AG04450 (cell line): ENCODE measurements at regions of chr18 and their contacts with region 1.

Region 1: DNA sequence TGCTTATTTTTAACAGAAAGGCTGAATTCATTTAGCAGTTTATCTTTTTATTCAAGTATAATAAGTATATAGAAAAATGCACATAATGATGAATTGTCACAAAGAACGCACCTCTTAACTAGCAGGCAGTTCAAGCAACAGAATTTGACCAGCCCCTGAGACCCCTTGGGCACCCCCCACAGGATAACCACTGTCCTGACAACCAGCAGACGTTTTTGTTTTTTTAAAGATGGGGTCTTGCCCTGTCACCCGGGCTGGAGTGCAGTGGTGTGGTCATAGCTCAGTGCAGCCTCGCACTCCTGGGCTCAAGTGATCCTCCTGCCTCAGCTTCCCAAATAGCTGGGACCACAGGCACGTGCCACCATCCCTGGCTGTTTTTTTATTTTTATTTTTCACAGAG is 14.0 kb downstream of the PRELID3A start:
- DNase-seq: no peak
- H3K4me3 ChIP-seq: no peak overlapping the region
- H3K27ac ChIP-seq: no peak overlapping the region
- H3K27me3 ChIP-seq: no peaks in the 10 kb centered on the region
- CTCF ChIP-seq: no peak

Region 2: DNA sequence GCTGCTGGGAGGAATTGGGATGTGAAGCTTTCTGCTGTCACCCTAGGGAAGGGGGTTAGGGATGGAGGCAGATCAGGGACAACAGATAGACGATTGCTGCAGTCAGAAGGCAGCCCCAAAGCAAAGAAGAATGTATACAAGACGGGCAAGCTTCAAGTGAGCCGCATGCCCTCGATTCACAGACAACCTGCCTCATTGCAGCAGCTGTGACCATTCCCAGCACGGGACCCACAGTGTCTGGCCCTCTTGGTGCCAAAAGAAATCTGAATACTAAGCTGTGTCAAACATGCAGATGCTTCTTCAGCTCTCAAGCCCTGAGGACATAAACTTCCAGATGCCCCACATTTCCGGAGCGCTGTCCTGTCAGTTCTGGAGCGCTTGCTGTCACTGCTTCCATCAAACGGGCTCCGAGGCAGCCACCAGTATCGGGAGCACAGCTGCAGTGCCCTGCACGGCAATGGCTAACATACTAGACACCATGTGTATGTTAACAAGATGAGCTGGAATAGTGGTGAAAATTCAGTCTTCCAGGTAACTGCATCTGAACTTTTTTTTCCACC is 19.8 kb after region 1 on chr18:
- CTCF ChIA-PET with region 1: interaction called, 12 read pairs
- POLR2A ChIA-PET with region 1: no interaction called
- DNase-seq: no peak
- H3K4me3 ChIP-seq: no peak overlapping the region
- H3K27ac ChIP-seq: peak overlapping the region; percentile 21
- H3K27me3 ChIP-seq: no peaks in the 10 kb centered on the region
- CTCF ChIP-seq: no peak

Region 3: DNA sequence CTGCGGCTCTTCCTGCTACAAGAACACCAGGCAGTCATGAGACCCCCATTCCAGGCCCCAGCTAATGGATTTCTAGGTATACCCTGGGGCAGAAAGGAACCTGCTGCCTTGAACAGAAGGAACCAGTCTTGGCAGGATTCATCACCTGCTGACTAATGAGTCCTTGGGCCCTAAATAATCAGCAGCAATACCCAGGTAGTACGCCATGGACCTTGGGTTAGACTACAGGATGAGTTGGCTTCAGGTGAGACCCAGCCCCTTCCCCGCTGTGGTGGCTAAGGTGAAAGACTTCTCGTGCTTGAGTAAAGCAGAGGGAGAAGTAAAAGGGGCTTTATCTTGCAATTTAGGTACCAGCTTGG is 131.1 kb after region 1 on chr18:
- CTCF ChIA-PET with region 1: no interaction called
- POLR2A ChIA-PET with region 1: no interaction called
- DNase-seq: no peak
- H3K4me3 ChIP-seq: no peak overlapping the region
- H3K27ac ChIP-seq: no peak overlapping the region
- H3K27me3 ChIP-seq: no peaks in the 10 kb centered on the region
- CTCF ChIP-seq: no peak